ENCODE measurements at regions of chr14 and their contacts with region 1.

Region 1: GRCh38 chr14:66070509-66071319 is 415.5 kb upstream of the CCDC196 start:
- DNase-seq: no peak
- H3K4me3 ChIP-seq: no peak overlapping the region
- H3K27me3 ChIP-seq: no peaks in the 10 kb centered on the region
- CTCF ChIP-seq: peak; percentile 83

Region 2: DNA sequence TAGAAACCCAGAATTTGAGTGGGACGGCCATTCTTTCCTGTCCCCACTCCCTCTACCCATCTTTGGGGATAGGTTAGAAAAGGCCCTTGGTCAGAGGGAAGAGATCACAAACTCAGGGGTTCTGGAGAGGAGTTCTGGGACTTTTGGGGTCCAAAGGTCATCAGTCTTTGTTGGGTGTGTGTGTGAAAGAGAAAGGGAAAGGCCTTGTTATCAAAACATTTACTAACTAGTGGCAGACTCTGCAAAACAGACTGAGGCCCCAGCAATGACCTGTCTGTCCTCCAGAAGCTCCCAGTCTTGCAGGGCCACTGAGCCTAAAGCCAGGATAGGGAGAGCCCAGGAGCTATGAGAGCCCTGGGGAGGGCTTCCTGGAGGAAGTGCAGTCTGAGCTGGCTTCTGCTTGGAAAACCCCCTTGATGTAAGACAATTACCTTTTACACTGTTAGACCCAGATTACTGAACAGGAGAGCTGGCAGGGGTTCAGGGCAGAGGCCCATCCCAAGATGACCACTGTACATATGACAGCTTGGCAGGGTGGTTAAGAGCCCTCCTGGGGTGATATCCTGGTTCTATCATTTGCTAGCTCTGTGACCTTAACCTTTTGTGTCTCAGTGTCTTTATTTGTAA is 13.7 kb before region 1 on chr14:
- CTCF ChIA-PET with region 1: interaction called, 17 read pairs
- POLR2A ChIA-PET with region 1: no interaction called
- DNase-seq: no peak
- H3K4me3 ChIP-seq: no peak overlapping the region
- H3K27me3 ChIP-seq: no peaks in the 10 kb centered on the region
- CTCF ChIP-seq: no peak

Region 3: DNA sequence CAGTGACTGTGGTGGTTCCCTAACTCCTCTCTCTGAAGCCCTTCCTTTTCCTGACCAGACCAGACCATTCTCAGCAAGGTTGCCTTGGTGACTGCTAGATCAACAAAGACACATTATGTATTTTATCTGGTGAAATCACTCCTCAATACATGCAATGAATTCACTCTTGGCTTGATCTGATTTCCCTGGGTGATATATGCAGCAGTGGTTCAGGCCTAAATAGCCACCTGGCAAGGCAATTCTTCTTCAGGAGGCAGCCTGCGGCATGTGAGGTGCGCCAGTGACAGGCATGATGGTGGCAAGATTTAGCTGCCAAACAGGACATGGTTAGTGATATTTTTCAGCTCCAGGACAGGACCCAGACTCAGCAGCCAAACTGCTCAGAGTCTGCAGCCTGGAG is 65.1 kb after region 1 on chr14:
- CTCF ChIA-PET with region 1: no interaction called
- POLR2A ChIA-PET with region 1: no interaction called
- DNase-seq: no peak
- H3K4me3 ChIP-seq: no peak overlapping the region
- H3K27me3 ChIP-seq: no peaks in the 10 kb centered on the region
- CTCF ChIP-seq: no peak

Region 4: DNA sequence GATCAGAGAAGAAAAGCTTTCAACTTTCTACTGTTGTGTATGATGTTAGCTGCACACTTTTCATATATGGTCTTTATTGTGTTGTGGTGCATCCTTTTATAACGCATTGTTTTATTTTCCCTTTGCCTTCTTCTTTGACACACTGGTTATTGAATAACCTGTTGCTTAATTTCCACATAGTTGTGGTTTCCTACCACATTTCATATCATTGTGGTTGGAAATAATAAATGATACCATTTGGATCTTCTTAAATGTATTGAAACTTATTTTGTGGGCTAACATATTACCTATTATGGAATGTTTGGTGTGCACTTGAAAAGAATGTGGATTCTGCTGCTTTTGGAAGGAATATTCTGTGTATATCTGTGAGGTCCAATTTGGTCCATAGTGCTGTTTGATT is 502.1 kb after region 1 on chr14:
- CTCF ChIA-PET with region 1: no interaction called
- POLR2A ChIA-PET with region 1: no interaction called
- DNase-seq: no peak
- H3K4me3 ChIP-seq: no peak overlapping the region
- H3K27me3 ChIP-seq: no peaks in the 10 kb centered on the region
- CTCF ChIP-seq: no peak

Measured in BJ (cell line).